Activated CD4-positive, alpha-beta memory T cell treated with anti-CD3 and anti-CD28 coated beads for 36 hours (primary cell): ENCODE measurements at regions of chr5 and their contacts with region 1.

Region 1: GRCh38 chr5:91280362-91281269 is 102.5 kb downstream of the ARRDC3 start:
- DNase-seq: peak; percentile 95
- H3K4me3 Mint-ChIP-seq: peak overlapping the region; percentile 84
- H3K27ac Mint-ChIP-seq: peak overlapping the region; percentile 99
- H3K4me1 Mint-ChIP-seq: peaks cover 51% of the 10 kb centered on the region
- H3K27me3 Mint-ChIP-seq: no peaks in the 10 kb centered on the region

Region 2: DNA sequence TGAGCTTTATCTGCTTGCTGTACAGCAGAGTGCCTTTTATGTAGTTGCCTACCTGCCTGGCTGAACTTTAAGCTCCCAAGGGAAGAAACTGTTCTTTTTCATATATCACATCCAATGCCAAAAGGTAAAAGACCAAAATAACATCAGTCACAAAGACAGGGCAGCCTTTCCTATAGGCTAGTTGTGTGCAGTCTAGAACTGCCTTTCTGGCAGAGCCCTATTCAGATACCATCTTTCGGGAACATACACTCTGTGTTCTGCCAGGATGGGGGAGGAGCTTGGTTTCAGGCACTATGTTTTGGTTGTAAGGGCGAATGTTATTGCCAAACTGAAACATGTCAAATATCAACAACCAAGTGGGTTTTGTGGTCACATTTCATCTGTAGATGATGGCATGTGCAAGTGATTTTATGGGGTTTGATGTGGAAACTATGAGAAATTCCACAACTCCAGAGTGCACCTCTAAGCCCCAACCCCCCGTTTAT is 407.5 kb before region 1 on chr5:
- CTCF ChIA-PET with region 1: no interaction called
- POLR2A ChIA-PET with region 1: no interaction called
- intact Hi-C with region 1: loop called (anchors 1 kb)
- DNase-seq: peak; percentile 40
- H3K4me3 Mint-ChIP-seq: no peak overlapping the region
- H3K27ac Mint-ChIP-seq: no peak overlapping the region
- H3K4me1 Mint-ChIP-seq: peaks cover 23% of the 10 kb centered on the region
- H3K27me3 Mint-ChIP-seq: peaks cover 33% of the 10 kb centered on the region

Region 3: GRCh38 chr5:91170266-91170665 is 110.3 kb before region 1 on chr5:
- CTCF ChIA-PET with region 1: no interaction called
- POLR2A ChIA-PET with region 1: no interaction called
- intact Hi-C with region 1: loop called (anchors 1 kb)
- DNase-seq: no peak
- H3K4me3 Mint-ChIP-seq: no peak overlapping the region
- H3K27ac Mint-ChIP-seq: peak overlapping the region; percentile 4
- H3K4me1 Mint-ChIP-seq: peaks cover 14% of the 10 kb centered on the region
- H3K27me3 Mint-ChIP-seq: peaks cover 9% of the 10 kb centered on the region

Region 4: DNA sequence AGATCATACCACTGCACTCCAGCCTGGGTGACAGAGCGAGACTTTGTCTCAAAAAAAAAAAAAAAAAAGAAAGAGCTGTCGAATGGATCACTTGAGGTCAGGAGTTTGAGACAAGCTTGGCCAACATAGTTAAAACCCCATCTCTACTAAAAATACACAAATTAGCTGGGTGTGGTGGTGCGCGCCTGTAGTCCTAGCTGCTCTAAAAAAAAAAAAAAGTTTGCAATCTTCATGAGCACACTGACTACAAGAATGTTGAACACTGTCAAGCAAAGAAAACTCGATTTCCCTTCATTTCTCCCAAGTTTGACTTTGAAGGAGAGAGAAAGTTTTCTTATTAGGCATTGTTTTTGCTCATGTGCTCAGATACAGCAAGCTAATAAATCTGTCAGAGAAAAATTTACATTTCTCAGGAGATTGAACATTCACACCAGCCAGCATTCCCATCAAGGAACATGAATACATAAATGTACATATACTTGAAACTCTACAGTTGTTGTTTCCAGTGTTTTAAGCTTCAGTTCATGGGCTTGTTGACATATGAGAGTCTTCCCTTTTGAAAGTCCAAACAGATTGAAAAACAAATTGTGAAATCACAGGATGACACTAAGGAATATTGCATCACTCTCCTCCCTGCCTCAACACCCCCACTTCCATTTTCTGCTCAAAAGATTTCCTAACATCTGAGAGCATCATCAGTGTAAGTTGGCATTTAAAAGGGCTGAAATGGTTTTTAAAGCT is 20.7 kb after region 1 on chr5:
- CTCF ChIA-PET with region 1: no interaction called
- POLR2A ChIA-PET with region 1: no interaction called
- intact Hi-C with region 1: loop called (anchors 2 kb)
- DNase-seq: no peak
- H3K4me3 Mint-ChIP-seq: no peak overlapping the region
- H3K27ac Mint-ChIP-seq: no peak overlapping the region
- H3K4me1 Mint-ChIP-seq: no peaks in the 10 kb centered on the region
- H3K27me3 Mint-ChIP-seq: no peaks in the 10 kb centered on the region

Region 5: DNA sequence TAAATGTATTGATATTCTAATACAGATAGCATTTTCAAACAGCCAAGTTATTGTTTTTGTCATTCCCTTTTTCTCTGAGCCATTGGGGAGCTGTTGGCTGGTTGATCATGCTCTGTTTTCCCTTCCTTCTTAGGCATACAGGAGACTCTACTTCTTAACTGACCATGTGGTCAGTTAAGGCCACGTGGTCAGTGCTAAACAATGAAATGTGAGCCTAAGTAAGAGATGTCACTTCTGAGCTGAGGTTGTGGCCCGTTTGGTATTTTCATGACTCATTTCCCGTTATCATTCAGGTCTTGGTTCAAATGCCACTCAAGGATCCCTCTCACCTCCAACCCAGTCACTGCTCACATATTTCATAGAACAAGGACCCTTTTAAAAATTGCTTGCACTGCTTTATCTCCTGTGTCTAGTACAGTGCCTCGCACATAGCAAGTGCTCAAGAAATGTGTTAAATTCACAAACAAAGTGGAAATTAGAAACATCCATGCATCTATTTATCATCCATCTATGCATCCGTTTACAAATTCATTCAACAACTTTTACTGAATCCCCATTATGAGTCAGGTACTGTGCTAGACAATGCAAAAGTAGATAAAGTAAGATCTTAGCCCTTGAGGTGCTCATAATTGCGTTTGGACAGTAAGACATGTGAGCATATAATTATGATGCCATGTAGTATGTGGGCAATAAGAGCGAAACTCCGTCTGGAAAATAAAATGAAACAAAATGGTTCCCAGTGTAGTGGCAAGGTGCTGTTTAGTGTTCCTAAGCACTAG is 51.8 kb after region 1 on chr5:
- CTCF ChIA-PET with region 1: interaction called, 3 read pairs
- POLR2A ChIA-PET with region 1: no interaction called
- intact Hi-C with region 1: loop called (anchors 1 kb)
- DNase-seq: peak; percentile 41
- H3K4me3 Mint-ChIP-seq: no peak overlapping the region
- H3K27ac Mint-ChIP-seq: no peak overlapping the region
- H3K4me1 Mint-ChIP-seq: peaks cover 15% of the 10 kb centered on the region
- H3K27me3 Mint-ChIP-seq: no peaks in the 10 kb centered on the region

Region 6: DNA sequence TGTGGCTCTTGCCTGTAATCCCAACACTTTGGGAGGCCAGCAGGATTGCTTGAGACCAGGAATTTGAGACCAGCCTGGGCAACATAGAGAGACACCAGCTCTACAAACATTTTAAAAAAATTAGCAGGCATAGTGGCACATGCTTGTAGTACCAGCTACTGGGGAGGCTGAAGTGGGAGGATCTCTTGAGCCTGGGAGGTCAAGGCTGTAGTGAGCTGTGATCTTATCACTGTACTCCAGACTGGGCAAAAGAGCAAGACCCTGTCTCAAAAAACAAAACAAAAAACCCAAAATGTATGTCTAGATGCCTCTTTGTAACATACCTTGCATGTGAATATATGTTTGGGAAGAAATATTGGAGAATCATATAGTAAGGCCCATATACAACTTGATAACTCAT is 86.8 kb after region 1 on chr5:
- CTCF ChIA-PET with region 1: no interaction called
- POLR2A ChIA-PET with region 1: no interaction called
- intact Hi-C with region 1: no loop called
- DNase-seq: no peak
- H3K4me3 Mint-ChIP-seq: no peak overlapping the region
- H3K27ac Mint-ChIP-seq: no peak overlapping the region
- H3K4me1 Mint-ChIP-seq: peaks cover 12% of the 10 kb centered on the region
- H3K27me3 Mint-ChIP-seq: peaks cover 4% of the 10 kb centered on the region

Region 7: DNA sequence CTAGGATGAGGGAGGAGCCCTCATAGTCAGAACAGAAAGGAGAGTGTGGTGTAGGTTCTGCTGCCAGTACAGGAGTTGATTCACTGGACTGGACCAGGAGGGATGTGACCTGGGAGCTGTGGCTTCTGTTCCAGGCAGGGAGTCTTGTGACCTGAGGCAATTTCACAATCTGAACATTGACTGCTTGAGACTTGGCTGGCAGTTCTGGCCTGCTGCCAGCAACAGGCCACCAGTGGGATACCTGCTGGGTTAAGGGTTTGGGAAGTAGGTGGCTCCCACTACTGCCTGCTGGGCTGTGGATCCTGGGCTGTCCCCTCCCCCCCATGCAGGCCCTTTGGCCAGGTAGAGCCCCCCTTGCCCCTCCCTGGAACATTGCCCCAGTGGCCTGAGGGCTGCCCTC is 371.1 kb after region 1 on chr5:
- CTCF ChIA-PET with region 1: no interaction called
- POLR2A ChIA-PET with region 1: no interaction called
- intact Hi-C with region 1: no loop called
- DNase-seq: no peak
- H3K4me3 Mint-ChIP-seq: no peak overlapping the region
- H3K27ac Mint-ChIP-seq: no peak overlapping the region
- H3K4me1 Mint-ChIP-seq: no peaks in the 10 kb centered on the region
- H3K27me3 Mint-ChIP-seq: no peaks in the 10 kb centered on the region